ENCODE measurements at regions of chr17 and their contacts with region 1.

Region 1: GRCh38 chr17:52957411-52957810 is 798.9 kb upstream of the CA10 start:
- DNase-seq: no peak
- H3K4me3 ChIP-seq: no peak overlapping the region
- H3K27ac ChIP-seq: no peak overlapping the region
- H3K4me1 ChIP-seq: no peaks in the 10 kb centered on the region
- H3K27me3 ChIP-seq: no peaks in the 10 kb centered on the region
- CTCF ChIP-seq: no peak

Region 2: DNA sequence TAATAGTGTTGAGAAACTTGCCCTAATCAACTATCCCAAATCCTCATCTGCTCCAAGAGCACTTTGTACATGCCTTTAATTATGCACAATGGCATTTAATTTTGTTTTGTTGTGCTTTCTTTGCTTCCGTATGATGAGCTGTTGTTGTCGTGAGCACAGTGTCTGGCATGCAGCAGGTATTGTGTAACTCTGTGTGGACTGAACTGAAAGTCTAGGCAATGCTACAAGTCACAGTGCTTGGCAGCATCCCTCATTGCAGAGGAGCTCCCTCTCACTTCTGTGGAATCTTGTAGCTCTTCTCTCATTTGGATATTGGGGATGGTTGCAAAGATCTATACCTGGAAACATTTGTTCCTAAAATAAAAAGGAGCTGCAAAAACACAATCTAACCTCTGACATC is 296.7 kb before region 1 on chr17:
- intact Hi-C with region 1: loop called (anchors 10 kb)
- DNase-seq: no peak
- H3K4me3 ChIP-seq: no peak overlapping the region
- H3K27ac ChIP-seq: no peak overlapping the region
- H3K4me1 ChIP-seq: no peaks in the 10 kb centered on the region
- H3K27me3 ChIP-seq: no peaks in the 10 kb centered on the region
- CTCF ChIP-seq: no peak

Region 3: DNA sequence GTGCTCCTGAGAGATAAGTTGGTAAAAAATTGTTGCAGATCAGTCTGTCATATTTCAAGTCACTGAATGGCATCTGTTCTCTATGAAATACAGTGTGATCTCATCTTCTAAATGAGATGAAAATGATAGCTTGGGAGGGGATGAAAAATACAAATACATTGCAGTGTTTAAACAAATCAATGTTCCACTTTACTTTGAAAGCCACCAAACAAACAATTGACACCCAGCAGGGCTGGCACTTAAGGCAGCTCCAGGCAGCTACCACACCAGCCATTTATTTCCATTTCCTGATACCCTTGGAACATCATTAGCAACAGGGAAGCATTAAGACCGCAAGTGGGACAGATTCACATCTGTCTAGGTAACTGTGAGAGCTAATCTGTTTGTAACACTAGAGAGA is 37.7 kb after region 1 on chr17:
- intact Hi-C with region 1: no loop called
- DNase-seq: no peak
- H3K4me3 ChIP-seq: no peak overlapping the region
- H3K27ac ChIP-seq: no peak overlapping the region
- H3K4me1 ChIP-seq: no peaks in the 10 kb centered on the region
- H3K27me3 ChIP-seq: no peaks in the 10 kb centered on the region
- CTCF ChIP-seq: no peak

Region 4: GRCh38 chr17:53127331-53127730 is 169.9 kb after region 1 on chr17:
- intact Hi-C with region 1: no loop called
- DNase-seq: no peak
- H3K4me3 ChIP-seq: no peak overlapping the region
- H3K27ac ChIP-seq: no peak overlapping the region
- H3K4me1 ChIP-seq: no peaks in the 10 kb centered on the region
- H3K27me3 ChIP-seq: no peaks in the 10 kb centered on the region
- CTCF ChIP-seq: no peak

Region 5: GRCh38 chr17:53142890-53143289 is 185.5 kb after region 1 on chr17:
- intact Hi-C with region 1: no loop called
- DNase-seq: no peak
- H3K4me3 ChIP-seq: no peak overlapping the region
- H3K27ac ChIP-seq: no peak overlapping the region
- H3K4me1 ChIP-seq: no peaks in the 10 kb centered on the region
- H3K27me3 ChIP-seq: no peaks in the 10 kb centered on the region
- CTCF ChIP-seq: no peak